Vagina (tissue), 2 donors: ENCODE measurements at regions of chr15 and their contacts with region 1.

Region 1: GRCh38 chr15:84924074-84924731 is 39.7 kb downstream of the SLC28A1 start:
- DNase-seq: no peak
- H3K4me3 ChIP-seq: no peak overlapping the region
- H3K27ac ChIP-seq: peak overlapping the region; percentile 72
- H3K4me1 ChIP-seq: peaks cover 21% of the 10 kb centered on the region
- H3K27me3 ChIP-seq: no peaks in the 10 kb centered on the region
- CTCF ChIP-seq: no peak
- POLR2A ChIP-seq: no peak

Region 2: GRCh38 chr15:84716036-84716799 is 208.0 kb before region 1 on chr15 and contains the start of gene SEC11A:
- intact Hi-C with region 1: loop called (anchors 2 kb)
- DNase-seq: peak; percentile 96 to 97
- H3K4me3 ChIP-seq: peak within 1 kb of the TSS; percentile 76 to 91
- H3K27ac ChIP-seq: peak within 1 kb of the TSS; percentile 90
- H3K4me1 ChIP-seq: peaks cover 33% of the 10 kb centered on the region
- H3K27me3 ChIP-seq: no peaks in the 10 kb centered on the region
- CTCF ChIP-seq: no peak
- POLR2A ChIP-seq: peak in 1 of 2 donors; percentile 68
- total RNA-seq, gene SEC11A: 99.2 TPM

Region 3: GRCh38 chr15:84833447-84834228 is 90.6 kb before region 1 on chr15:
- intact Hi-C with region 1: loop called (anchors 5 kb)
- DNase-seq: no peak
- H3K4me3 ChIP-seq: no peak overlapping the region
- H3K27ac ChIP-seq: no peak overlapping the region
- H3K4me1 ChIP-seq: peaks cover 8% of the 10 kb centered on the region
- H3K27me3 ChIP-seq: no peaks in the 10 kb centered on the region
- CTCF ChIP-seq: no peak
- POLR2A ChIP-seq: no peak

Region 4: GRCh38 chr15:85091990-85092389 is 167.8 kb after region 1 on chr15:
- intact Hi-C with region 1: no loop called
- DNase-seq: peak in 1 of 2 donors; percentile 37
- H3K4me3 ChIP-seq: no peak overlapping the region
- H3K27ac ChIP-seq: no peak overlapping the region
- H3K4me1 ChIP-seq: no peaks in the 10 kb centered on the region
- H3K27me3 ChIP-seq: no peaks in the 10 kb centered on the region
- CTCF ChIP-seq: no peak
- POLR2A ChIP-seq: no peak